Body of pancreas (tissue), 4 donors: ENCODE measurements at regions of chr1 and their contacts with region 1.

Region 1: GRCh38 chr1:29033829-29034466 is 89.8 kb downstream of the TMEM200B start:
- DNase-seq: no peak
- ATAC-seq: peak; percentile 63
- H3K4me3 ChIP-seq: no peak overlapping the region
- H3K27ac ChIP-seq: no peak overlapping the region
- H3K4me1 ChIP-seq: no peaks in the 10 kb centered on the region
- H3K27me3 ChIP-seq: no peaks in the 10 kb centered on the region
- CTCF ChIP-seq: peak in 6 of 7 experiments; percentile 40 to 85 (median 76)
- POLR2A ChIP-seq: no peak

Region 2: GRCh38 chr1:28718586-28719331 is 315.2 kb before region 1 on chr1:
- intact Hi-C with region 1: no loop called
- DNase-seq: no peak
- ATAC-seq: no peak
- H3K4me3 ChIP-seq: no peak overlapping the region
- H3K27ac ChIP-seq: no peak overlapping the region
- H3K4me1 ChIP-seq: no peaks in the 10 kb centered on the region
- H3K27me3 ChIP-seq: no peaks in the 10 kb centered on the region
- CTCF ChIP-seq: no peak
- POLR2A ChIP-seq: no peak

Region 3: DNA sequence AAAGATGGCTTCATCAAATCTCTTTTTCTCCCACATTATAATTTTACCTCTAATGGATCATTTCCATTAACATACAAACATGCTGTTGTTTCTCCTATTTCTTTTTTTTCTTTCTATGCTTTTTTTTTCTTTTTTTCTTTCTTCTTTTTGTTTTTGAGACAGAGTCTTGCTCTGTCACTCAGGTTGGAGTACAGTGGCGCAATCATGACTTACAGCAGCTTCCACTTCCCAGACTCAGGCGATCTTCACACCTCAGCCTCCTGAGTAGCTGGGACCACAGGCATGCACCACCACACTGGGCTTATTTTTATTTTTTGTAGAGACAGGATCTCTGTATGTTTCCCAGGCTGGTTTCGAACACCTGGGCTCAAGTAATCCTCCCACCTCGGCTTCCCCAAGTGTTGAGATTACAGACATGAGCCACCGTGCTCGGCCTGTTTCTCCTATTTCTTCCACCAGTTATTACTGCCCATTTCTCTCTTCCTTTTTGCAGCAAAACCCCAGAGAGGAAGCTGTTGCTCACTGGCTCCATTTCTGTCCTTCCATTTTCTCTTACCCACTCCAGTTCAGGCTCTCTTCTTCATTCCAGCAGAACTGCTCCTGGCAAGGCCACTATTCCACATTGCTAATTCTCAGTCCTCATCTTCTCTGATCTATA is 254.1 kb before region 1 on chr1:
- intact Hi-C with region 1: loop called (anchors 10 kb)
- DNase-seq: no peak
- ATAC-seq: no peak
- H3K4me3 ChIP-seq: no peak overlapping the region
- H3K27ac ChIP-seq: no peak overlapping the region
- H3K4me1 ChIP-seq: peaks cover 8% of the 10 kb centered on the region
- H3K27me3 ChIP-seq: no peaks in the 10 kb centered on the region
- CTCF ChIP-seq: no peak
- POLR2A ChIP-seq: no peak

Region 4: DNA sequence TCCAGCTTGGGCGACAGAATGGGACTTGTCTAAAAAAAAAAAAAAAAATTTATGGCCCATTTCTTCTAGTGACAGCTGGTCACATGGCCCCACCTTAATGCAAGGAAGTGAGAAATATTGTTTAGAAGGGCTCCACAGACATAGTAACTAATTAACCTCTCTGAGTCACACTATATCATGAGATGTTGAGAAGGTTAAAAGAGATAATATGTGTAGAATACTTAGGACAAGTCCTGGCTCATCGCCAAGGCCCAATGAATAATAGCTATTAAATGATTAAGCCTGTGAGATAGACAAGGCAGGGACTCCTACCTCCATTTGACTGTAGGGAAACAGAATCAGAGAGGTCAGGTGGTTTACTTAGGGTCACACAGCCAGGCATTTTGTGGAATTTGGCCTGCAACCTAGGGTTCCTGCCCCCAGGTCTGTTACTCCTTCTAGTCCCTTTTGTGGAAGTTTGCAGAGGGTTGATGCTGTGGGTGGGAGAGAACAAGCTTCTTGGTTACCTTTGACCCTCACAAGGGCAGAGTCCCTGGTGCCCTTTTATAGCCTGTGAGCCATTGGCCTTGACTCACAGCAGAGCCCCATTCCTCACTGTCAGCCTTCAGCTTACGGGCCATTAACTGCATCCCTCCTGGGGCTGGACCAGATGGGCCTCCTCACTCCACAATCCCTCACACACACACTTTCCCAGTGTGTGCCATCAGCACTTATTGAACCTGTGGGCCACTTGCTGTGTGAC is 173.4 kb before region 1 on chr1:
- intact Hi-C with region 1: no loop called
- DNase-seq: peak in 2 of 4 donors; percentile 22 to 43
- ATAC-seq: no peak
- H3K4me3 ChIP-seq: no peak overlapping the region
- H3K27ac ChIP-seq: no peak overlapping the region
- H3K4me1 ChIP-seq: no peaks in the 10 kb centered on the region
- H3K27me3 ChIP-seq: no peaks in the 10 kb centered on the region
- CTCF ChIP-seq: no peak
- POLR2A ChIP-seq: no peak